A549 (cell line): ENCODE measurements at regions of chr19 and their contacts with region 1.

Region 1: GRCh38 chr19:56333505-56333904 is 18.9 kb upstream of the ZSCAN5A start:
- DNase-seq: peak; percentile 43 to 70
- ATAC-seq: peak in 1 of 2 experiments; percentile 84; a peak in 4 of 6 replicates
- H3K4me3 ChIP-seq: no peak overlapping the region
- H3K27ac ChIP-seq: no peak overlapping the region
- H3K4me1 ChIP-seq: no peaks in the 10 kb centered on the region
- CTCF ChIP-seq: peak; percentile 66
- EP300 ChIP-seq: no peak
- POLR2A ChIP-seq: no peak
- RAD21 ChIP-seq: peak; percentile 78 to 90

Region 2: GRCh38 chr19:56066152-56067023 is 267.1 kb before region 1 on chr19:
- CTCF ChIA-PET with region 1: interaction called, 40 read pairs
- POLR2A ChIA-PET with region 1: interaction called, 3 read pairs
- DNase-seq: peak; percentile 58 to 78
- ATAC-seq: peak; percentile 83 to 94
- H3K4me3 ChIP-seq: no peak overlapping the region; the same call in 2 of the 3 replicates
- H3K27ac ChIP-seq: no peak overlapping the region
- H3K4me1 ChIP-seq: no peaks in the 10 kb centered on the region
- CTCF ChIP-seq: peak; percentile 80
- EP300 ChIP-seq: no peak
- POLR2A ChIP-seq: no peak
- RAD21 ChIP-seq: peak; percentile 81 to 85

Region 3: GRCh38 chr19:56080669-56081401 is 252.7 kb before region 1 on chr19:
- CTCF ChIA-PET with region 1: interaction called, 33 read pairs
- POLR2A ChIA-PET with region 1: no interaction called
- DNase-seq: peak; percentile 48 to 65
- ATAC-seq: peak; percentile 10 to 64; a peak in 4 of 6 replicates
- H3K4me3 ChIP-seq: no peak overlapping the region
- H3K27ac ChIP-seq: no peak overlapping the region
- H3K4me1 ChIP-seq: no peaks in the 10 kb centered on the region
- CTCF ChIP-seq: peak; percentile 17; the same call in 2 of the 3 replicates
- EP300 ChIP-seq: no peak
- POLR2A ChIP-seq: no peak
- RAD21 ChIP-seq: peak in 1 of 2 experiments; percentile 46; a peak in 2 of 5 replicates

Region 4: DNA sequence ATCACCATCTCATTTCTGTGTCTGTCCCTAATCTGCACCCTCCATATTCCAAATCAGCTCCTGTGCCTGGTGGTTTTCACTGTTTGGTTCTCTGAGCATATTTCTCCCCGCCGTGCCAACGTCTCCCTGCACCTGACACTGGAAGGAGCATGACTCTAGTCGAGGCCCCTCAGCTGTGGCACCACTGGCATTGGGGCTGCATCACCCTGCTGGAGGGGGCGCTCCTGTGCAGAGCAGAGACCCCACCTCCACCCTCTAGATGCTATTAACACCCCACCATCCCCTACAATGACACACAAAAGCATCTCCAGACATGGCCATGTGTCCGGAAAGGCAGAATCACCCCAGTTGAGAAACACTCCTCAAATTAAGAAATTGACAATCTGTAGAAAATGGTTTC is 110.6 kb before region 1 on chr19:
- CTCF ChIA-PET with region 1: no interaction called
- POLR2A ChIA-PET with region 1: no interaction called
- DNase-seq: no peak
- ATAC-seq: no peak
- H3K4me3 ChIP-seq: no peak overlapping the region
- H3K27ac ChIP-seq: no peak overlapping the region
- H3K4me1 ChIP-seq: no peaks in the 10 kb centered on the region
- CTCF ChIP-seq: no peak
- EP300 ChIP-seq: no peak
- POLR2A ChIP-seq: no peak
- RAD21 ChIP-seq: no peak

Region 5: GRCh38 chr19:56252699-56253422 is 80.6 kb before region 1 on chr19:
- CTCF ChIA-PET with region 1: interaction called, 51 read pairs
- POLR2A ChIA-PET with region 1: interaction called, 7 read pairs
- DNase-seq: peak; percentile 68 to 87
- ATAC-seq: peak; percentile 83 to 96; a peak in 5 of 6 replicates
- H3K4me3 ChIP-seq: no peak overlapping the region
- H3K27ac ChIP-seq: no peak overlapping the region
- H3K4me1 ChIP-seq: no peaks in the 10 kb centered on the region
- CTCF ChIP-seq: peak; percentile 35; the same call in 2 of the 3 replicates
- EP300 ChIP-seq: no peak
- POLR2A ChIP-seq: no peak
- RAD21 ChIP-seq: peak; percentile 20 to 67; a peak in 3 of 5 replicates

Region 6: GRCh38 chr19:56314562-56315077 is 18.9 kb before region 1 on chr19 and contains the start of gene ZSCAN5A:
- CTCF ChIA-PET with region 1: interaction called, 10 read pairs
- POLR2A ChIA-PET with region 1: no interaction called
- DNase-seq: peak; percentile 97 to 98
- ATAC-seq: peak; percentile 87 to 91
- H3K4me3 ChIP-seq: peak within 1 kb of the TSS; percentile 65
- H3K27ac ChIP-seq: peak within 1 kb of the TSS; percentile 92 to 98
- H3K4me1 ChIP-seq: peaks cover 9% of the 10 kb centered on the region; the same call in 1 of the 3 replicates
- CTCF ChIP-seq: no peak
- EP300 ChIP-seq: no peak
- POLR2A ChIP-seq: peak; percentile 62
- RAD21 ChIP-seq: no peak
- polyA plus RNA-seq, gene ZSCAN5A: 13.3 and 16.1 TPM in 2 replicates

Region 7: DNA sequence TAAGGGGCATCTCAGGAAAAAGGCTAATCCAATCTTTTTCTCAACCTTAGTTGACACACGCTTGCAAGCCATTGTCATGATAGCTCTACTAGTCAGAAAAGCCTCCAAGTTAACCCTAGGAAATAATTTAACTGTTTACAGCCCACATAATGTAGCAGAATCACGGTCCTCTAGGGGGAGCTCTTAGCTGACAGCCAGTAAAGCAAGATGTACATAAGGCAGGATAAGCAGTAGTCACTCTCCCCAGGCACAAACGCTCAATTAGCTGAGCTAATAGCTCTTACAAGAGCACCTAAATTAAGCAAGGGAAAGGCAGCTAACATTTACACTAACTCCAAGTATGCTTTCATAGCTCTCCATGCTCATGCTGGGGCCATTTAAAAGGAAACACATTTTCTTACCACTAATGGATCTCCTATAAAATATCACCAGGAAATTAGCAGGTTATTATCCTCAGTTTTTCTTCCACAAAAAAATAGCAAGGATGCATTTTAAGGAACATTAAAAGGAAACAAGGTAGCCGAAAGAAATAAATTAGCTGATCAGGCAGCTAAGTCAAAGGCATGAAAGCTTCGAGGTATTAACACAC is 14.9 kb after region 1 on chr19:
- CTCF ChIA-PET with region 1: interaction called, 11 read pairs
- POLR2A ChIA-PET with region 1: no interaction called
- DNase-seq: peak in 1 of 2 experiments; percentile 30
- ATAC-seq: peak in 1 of 2 experiments; percentile 44; a peak in 1 of 6 replicates
- H3K4me3 ChIP-seq: no peak overlapping the region
- H3K27ac ChIP-seq: no peak overlapping the region
- H3K4me1 ChIP-seq: no peaks in the 10 kb centered on the region
- CTCF ChIP-seq: no peak
- EP300 ChIP-seq: no peak
- POLR2A ChIP-seq: no peak
- RAD21 ChIP-seq: peak in 1 of 2 experiments; percentile 18; a peak in 1 of 5 replicates

Region 8: DNA sequence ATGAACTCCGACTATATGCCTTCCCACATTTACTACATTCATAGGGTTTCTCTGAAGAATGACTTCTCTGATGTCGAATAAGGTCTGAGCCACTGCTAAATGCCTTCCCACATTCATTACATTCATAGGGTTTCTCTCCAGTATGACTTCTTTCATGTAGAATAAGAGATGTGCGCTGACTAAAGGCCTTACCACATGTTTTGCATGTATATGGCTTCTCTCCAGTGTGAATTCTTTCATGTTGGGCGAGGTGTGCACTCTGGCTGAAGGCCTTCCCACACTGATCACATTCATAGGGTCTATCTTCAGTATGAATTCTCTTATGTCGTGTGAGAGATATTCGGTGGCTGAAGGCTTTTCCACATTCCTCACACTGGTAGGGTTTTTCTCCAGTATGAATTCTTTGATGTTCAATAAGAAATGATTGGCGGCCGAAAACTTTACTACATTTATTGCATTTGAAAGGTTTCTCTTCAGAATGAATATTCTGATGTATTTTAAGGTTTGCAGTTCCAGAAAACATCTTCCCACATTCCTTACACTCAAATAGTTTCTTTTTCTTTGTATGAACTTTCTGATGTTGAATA is 107.8 kb after region 1 on chr19:
- CTCF ChIA-PET with region 1: no interaction called
- POLR2A ChIA-PET with region 1: no interaction called
- DNase-seq: no peak
- ATAC-seq: no peak
- H3K4me3 ChIP-seq: no peak overlapping the region
- H3K27ac ChIP-seq: no peak overlapping the region
- H3K4me1 ChIP-seq: no peaks in the 10 kb centered on the region
- CTCF ChIP-seq: no peak
- EP300 ChIP-seq: no peak
- POLR2A ChIP-seq: no peak
- RAD21 ChIP-seq: no peak